ENCODE measurements at regions of chr2 and their contacts with region 1.

Region 1: GRCh38 chr2:193837111-193837737 is 1642.5 kb upstream of the TMEFF2 start:
- DNase-seq: no peak
- ATAC-seq: no peak
- H3K4me3 ChIP-seq: no peak overlapping the region
- H3K27ac ChIP-seq: no peak overlapping the region
- H3K4me1 ChIP-seq: no peaks in the 10 kb centered on the region
- H3K27me3 ChIP-seq: no peaks in the 10 kb centered on the region
- CTCF ChIP-seq: no peak

Region 2: GRCh38 chr2:193566886-193567285 is 270.3 kb before region 1 on chr2:
- intact Hi-C with region 1: no loop called
- DNase-seq: no peak
- ATAC-seq: no peak
- H3K4me3 ChIP-seq: no peak overlapping the region
- H3K27ac ChIP-seq: no peak overlapping the region
- H3K4me1 ChIP-seq: no peaks in the 10 kb centered on the region
- H3K27me3 ChIP-seq: no peaks in the 10 kb centered on the region
- CTCF ChIP-seq: no peak

Region 3: DNA sequence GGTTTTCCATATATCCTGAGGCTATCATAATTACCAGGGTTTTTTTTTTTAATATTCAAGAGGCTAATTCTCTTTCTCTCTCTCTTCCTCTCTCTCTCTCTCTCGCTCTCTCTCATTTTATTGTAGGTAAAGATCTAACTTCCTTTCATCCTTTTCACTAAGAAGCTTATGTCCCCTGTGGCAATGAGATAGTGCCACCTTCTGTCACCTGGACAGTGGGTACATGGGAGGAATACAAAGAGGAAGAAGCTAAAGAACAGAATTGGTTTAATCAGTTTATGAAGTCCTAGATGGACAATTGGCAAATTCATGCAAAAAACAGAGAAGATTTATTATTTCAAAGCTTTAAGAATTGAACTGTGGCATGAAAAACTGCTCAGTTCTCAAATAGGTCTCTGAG is 60.2 kb before region 1 on chr2:
- intact Hi-C with region 1: no loop called
- DNase-seq: no peak
- ATAC-seq: no peak
- H3K4me3 ChIP-seq: no peak overlapping the region
- H3K27ac ChIP-seq: no peak overlapping the region
- H3K4me1 ChIP-seq: no peaks in the 10 kb centered on the region
- H3K27me3 ChIP-seq: no peaks in the 10 kb centered on the region
- CTCF ChIP-seq: no peak

Region 4: GRCh38 chr2:193824474-193824873 is 12.8 kb before region 1 on chr2:
- intact Hi-C with region 1: loop called in 1 of 10 experiments (anchors 2 kb)
- DNase-seq: no peak
- ATAC-seq: no peak
- H3K4me3 ChIP-seq: no peak overlapping the region
- H3K27ac ChIP-seq: no peak overlapping the region
- H3K4me1 ChIP-seq: no peaks in the 10 kb centered on the region
- H3K27me3 ChIP-seq: no peaks in the 10 kb centered on the region
- CTCF ChIP-seq: no peak